ENCODE measurements at regions of chr11 and their contacts with region 1.

Region 1: GRCh38 chr11:65487413-65488272 is 11.2 kb upstream of the MALAT1 start:
- DNase-seq: peak in 1 of 9 donors; percentile 54
- ATAC-seq: peak; percentile 78
- H3K4me3 ChIP-seq: no peak overlapping the region
- H3K4me3 Mint-ChIP-seq: peak overlapping the region in 6 of 10 donors; percentile 19 to 58 (median 35)
- H3K27ac ChIP-seq: no peak overlapping the region
- H3K27ac Mint-ChIP-seq: peak overlapping the region in 5 of 9 donors; percentile 25 to 88 (median 44)
- H3K4me1 ChIP-seq: peaks cover 0 to 9% of the 10 kb centered on the region in 2 donors
- H3K4me1 Mint-ChIP-seq: peaks cover 19 to 36% (median 23%) of the 10 kb centered on the region in 7 donors
- H3K27me3 ChIP-seq: no peaks in the 10 kb centered on the region
- H3K27me3 Mint-ChIP-seq: no peaks in the 10 kb centered on the region

Region 2: DNA sequence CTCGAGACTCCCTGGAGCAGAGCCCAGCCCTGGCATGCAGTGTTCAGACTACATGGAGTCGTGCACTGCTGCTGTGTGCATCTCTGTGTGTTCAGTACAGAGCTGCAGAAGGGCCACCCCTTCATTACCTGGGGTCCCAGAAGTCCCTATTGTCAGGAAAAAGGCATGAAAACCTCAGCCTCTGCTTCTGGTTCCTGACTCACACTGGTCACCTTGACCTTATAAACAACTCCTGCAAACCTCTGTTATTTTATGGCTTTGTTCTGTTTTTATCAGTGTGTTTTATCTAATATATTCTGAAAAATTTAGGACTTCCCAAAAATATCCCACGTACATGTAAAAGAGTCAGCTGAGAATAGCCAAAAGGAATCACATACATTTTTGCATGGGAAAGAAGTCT is 980.9 kb before region 1 on chr11:
- CTCF ChIA-PET with region 1: no interaction called
- POLR2A ChIA-PET with region 1: no interaction called
- intact Hi-C with region 1: no loop called
- DNase-seq: no peak
- ATAC-seq: no peak
- H3K4me3 ChIP-seq: no peak overlapping the region
- H3K4me3 Mint-ChIP-seq: no peak overlapping the region
- H3K27ac ChIP-seq: no peak overlapping the region
- H3K27ac Mint-ChIP-seq: no peak overlapping the region
- H3K4me1 ChIP-seq: no peaks in the 10 kb centered on the region
- H3K4me1 Mint-ChIP-seq: peaks cover 0 to 2% (median 0%) of the 10 kb centered on the region in 7 donors
- H3K27me3 ChIP-seq: no peaks in the 10 kb centered on the region
- H3K27me3 Mint-ChIP-seq: peaks cover 4 to 25% (median 13%) of the 10 kb centered on the region in 5 donors

Region 3: GRCh38 chr11:65471410-65471762 is 16.3 kb before region 1 on chr11:
- CTCF ChIA-PET with region 1: interaction called, 4 read pairs
- POLR2A ChIA-PET with region 1: interaction called, 122 read pairs
- intact Hi-C with region 1: no loop called
- DNase-seq: peak in 2 of 9 donors; percentile 16 to 21
- ATAC-seq: peak; percentile 49
- H3K4me3 ChIP-seq: peak overlapping the region; percentile 15
- H3K4me3 Mint-ChIP-seq: peak overlapping the region in 9 of 10 donors; percentile 14 to 94 (median 84)
- H3K27ac ChIP-seq: peak overlapping the region; percentile 78
- H3K27ac Mint-ChIP-seq: peak overlapping the region; percentile 97 to 100 (median 98)
- H3K4me1 ChIP-seq: peaks cover 10 to 20% of the 10 kb centered on the region in 2 donors
- H3K4me1 Mint-ChIP-seq: peaks cover 6 to 37% (median 15%) of the 10 kb centered on the region in 7 donors
- H3K27me3 ChIP-seq: no peaks in the 10 kb centered on the region
- H3K27me3 Mint-ChIP-seq: no peaks in the 10 kb centered on the region

Region 4: GRCh38 chr11:65477149-65477965 is 10.3 kb before region 1 on chr11:
- CTCF ChIA-PET with region 1: interaction called, 4 read pairs
- POLR2A ChIA-PET with region 1: interaction called, 122 read pairs
- intact Hi-C with region 1: no loop called
- DNase-seq: peak; percentile 69 to 96 (median 75)
- ATAC-seq: peak; percentile 94
- H3K4me3 ChIP-seq: peak overlapping the region; percentile 97
- H3K4me3 Mint-ChIP-seq: peak overlapping the region; percentile 87 to 100 (median 96)
- H3K27ac ChIP-seq: peak overlapping the region; percentile 96
- H3K27ac Mint-ChIP-seq: peak overlapping the region; percentile 94 to 100 (median 99)
- H3K4me1 ChIP-seq: peaks cover 6 to 17% of the 10 kb centered on the region in 2 donors
- H3K4me1 Mint-ChIP-seq: peaks cover 8 to 30% (median 14%) of the 10 kb centered on the region in 7 donors
- H3K27me3 ChIP-seq: no peaks in the 10 kb centered on the region
- H3K27me3 Mint-ChIP-seq: peaks cover 0 to 2% (median 0%) of the 10 kb centered on the region in 5 donors

Region 5: DNA sequence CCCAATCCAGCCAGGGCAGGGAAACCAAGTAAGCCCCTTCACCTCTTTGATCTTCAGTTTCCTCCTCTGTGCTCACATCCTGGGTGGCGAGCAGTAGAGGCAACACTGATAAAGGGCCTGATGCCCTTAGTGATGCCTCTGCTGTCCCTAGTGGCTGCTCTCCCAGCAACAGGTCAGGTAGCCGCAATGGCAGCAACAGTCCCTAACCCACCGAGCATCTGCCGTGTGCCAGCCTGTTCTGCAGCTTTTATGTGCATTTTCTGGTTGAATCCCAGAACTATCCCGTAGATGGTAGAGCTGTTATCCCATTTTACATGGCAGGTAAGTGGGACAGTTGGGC is 42.5 kb after region 1 on chr11:
- CTCF ChIA-PET with region 1: no interaction called
- POLR2A ChIA-PET with region 1: no interaction called
- intact Hi-C with region 1: no loop called
- DNase-seq: peak in 2 of 9 donors; percentile 52
- ATAC-seq: peak; percentile 69
- H3K4me3 ChIP-seq: no peak overlapping the region
- H3K4me3 Mint-ChIP-seq: peak overlapping the region in 4 of 10 donors; percentile 21 to 79 (median 36)
- H3K27ac ChIP-seq: peak overlapping the region; percentile 57
- H3K27ac Mint-ChIP-seq: peak overlapping the region; percentile 49 to 92 (median 78)
- H3K4me1 ChIP-seq: peaks cover 16 to 24% of the 10 kb centered on the region in 2 donors
- H3K4me1 Mint-ChIP-seq: peaks cover 13 to 43% (median 29%) of the 10 kb centered on the region in 7 donors
- H3K27me3 ChIP-seq: no peaks in the 10 kb centered on the region
- H3K27me3 Mint-ChIP-seq: no peaks in the 10 kb centered on the region

Region 6: GRCh38 chr11:65685981-65686380 is 198.3 kb after region 1 on chr11:
- CTCF ChIA-PET with region 1: no interaction called
- POLR2A ChIA-PET with region 1: no interaction called
- intact Hi-C with region 1: no loop called
- DNase-seq: no peak
- ATAC-seq: no peak
- H3K4me3 ChIP-seq: no peak overlapping the region
- H3K4me3 Mint-ChIP-seq: no peak overlapping the region
- H3K27ac ChIP-seq: no peak overlapping the region
- H3K27ac Mint-ChIP-seq: no peak overlapping the region
- H3K4me1 ChIP-seq: no peaks in the 10 kb centered on the region
- H3K4me1 Mint-ChIP-seq: no peaks in the 10 kb centered on the region
- H3K27me3 ChIP-seq: no peaks in the 10 kb centered on the region
- H3K27me3 Mint-ChIP-seq: peaks cover 0 to 27% (median 0%) of the 10 kb centered on the region in 5 donors